Naive thymus-derived CD4-positive, alpha-beta T cell (primary cell): ENCODE measurements at regions of chr1 and their contacts with region 1.

Region 1: GRCh38 chr1:20633190-20634064 is at the start of gene PINK1:
- DNase-seq: peak; percentile 78 to 99 (median 90)
- ATAC-seq: peak; percentile 92
- H3K4me3 ChIP-seq: peak within 1 kb of the TSS; percentile 80
- H3K4me3 Mint-ChIP-seq: peak within 1 kb of the TSS; percentile 78 to 98 (median 94)
- H3K27ac ChIP-seq: peak within 1 kb of the TSS; percentile 86
- H3K27ac Mint-ChIP-seq: peak within 1 kb of the TSS; percentile 69 to 94 (median 88)
- H3K4me1 ChIP-seq: peaks cover 8 to 9% of the 10 kb centered on the region in 2 donors
- H3K4me1 Mint-ChIP-seq: peaks cover 0 to 13% (median 8%) of the 10 kb centered on the region in 7 donors
- H3K27me3 ChIP-seq: no peaks in the 10 kb centered on the region
- H3K27me3 Mint-ChIP-seq: peaks cover 0 to 22% (median 2%) of the 10 kb centered on the region in 5 donors
- total RNA-seq, gene PINK1: 4.3 to 19.7 (median 13.1) TPM

Region 2: GRCh38 chr1:20507564-20508410 is 125.6 kb before region 1 on chr1 and contains the start of gene MUL1:
- CTCF ChIA-PET with region 1: interaction called, 3 read pairs
- POLR2A ChIA-PET with region 1: interaction called, 6 read pairs
- intact Hi-C with region 1: loop called (anchors 1 to 5 kb)
- DNase-seq: peak; percentile 83 to 95 (median 89)
- ATAC-seq: peak; percentile 94
- H3K4me3 ChIP-seq: peak within 1 kb of the TSS; percentile 88
- H3K4me3 Mint-ChIP-seq: peak within 1 kb of the TSS; percentile 83 to 98 (median 88)
- H3K27ac ChIP-seq: peak within 1 kb of the TSS; percentile 97
- H3K27ac Mint-ChIP-seq: peak within 1 kb of the TSS; percentile 72 to 97 (median 92)
- H3K4me1 ChIP-seq: peaks cover 8 to 22% of the 10 kb centered on the region in 2 donors
- H3K4me1 Mint-ChIP-seq: peaks cover 15 to 40% (median 23%) of the 10 kb centered on the region in 7 donors
- H3K27me3 ChIP-seq: no peaks in the 10 kb centered on the region
- H3K27me3 Mint-ChIP-seq: peaks cover 0 to 5% (median 1%) of the 10 kb centered on the region in 5 donors
- total RNA-seq, gene MUL1: 16.5 to 21.5 (median 20.5) TPM

Region 3: DNA sequence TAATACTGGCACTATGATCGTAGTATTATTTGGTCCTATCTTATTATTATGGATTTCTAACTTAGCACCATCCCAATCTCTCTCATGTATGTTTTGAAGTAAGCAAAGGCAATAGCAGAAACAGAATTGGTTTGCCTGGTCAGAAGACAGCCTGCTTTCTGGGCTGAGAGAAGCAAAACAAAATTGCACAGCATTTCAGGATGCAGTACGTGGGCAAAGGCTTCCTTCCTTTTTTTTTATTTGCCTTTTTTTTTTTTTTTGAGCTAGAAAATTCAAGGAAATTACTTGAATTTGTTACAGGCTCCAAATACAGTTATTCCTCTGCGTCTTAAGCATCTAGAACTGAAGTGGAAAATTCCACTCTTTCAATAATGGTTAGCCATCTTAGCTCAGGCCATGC is 35.8 kb before region 1 on chr1:
- CTCF ChIA-PET with region 1: no interaction called
- POLR2A ChIA-PET with region 1: no interaction called
- intact Hi-C with region 1: no loop called
- DNase-seq: no peak
- ATAC-seq: no peak
- H3K4me3 ChIP-seq: no peak overlapping the region
- H3K4me3 Mint-ChIP-seq: no peak overlapping the region
- H3K27ac ChIP-seq: no peak overlapping the region
- H3K27ac Mint-ChIP-seq: no peak overlapping the region
- H3K4me1 ChIP-seq: no peaks in the 10 kb centered on the region
- H3K4me1 Mint-ChIP-seq: peaks cover 0 to 2% (median 0%) of the 10 kb centered on the region in 7 donors
- H3K27me3 ChIP-seq: no peaks in the 10 kb centered on the region
- H3K27me3 Mint-ChIP-seq: peaks cover 1 to 22% (median 10%) of the 10 kb centered on the region in 5 donors

Region 4: GRCh38 chr1:20661207-20662109 is 28.0 kb after region 1 on chr1 and contains the start of gene DDOST:
- CTCF ChIA-PET with region 1: interaction called, 8 read pairs
- POLR2A ChIA-PET with region 1: interaction called, 34 read pairs
- intact Hi-C with region 1: loop called (anchors 1 kb)
- DNase-seq: peak; percentile 78 to 96 (median 94)
- ATAC-seq: peak; percentile 98
- H3K4me3 ChIP-seq: peak within 1 kb of the TSS; percentile 93
- H3K4me3 Mint-ChIP-seq: peak within 1 kb of the TSS; percentile 89 to 99 (median 96)
- H3K27ac ChIP-seq: peak within 1 kb of the TSS; percentile 87
- H3K27ac Mint-ChIP-seq: peak within 1 kb of the TSS; percentile 85 to 99 (median 98)
- H3K4me1 ChIP-seq: peaks cover 21 to 24% of the 10 kb centered on the region in 2 donors
- H3K4me1 Mint-ChIP-seq: peaks cover 31 to 60% (median 41%) of the 10 kb centered on the region in 7 donors
- H3K27me3 ChIP-seq: no peaks in the 10 kb centered on the region
- H3K27me3 Mint-ChIP-seq: no peaks in the 10 kb centered on the region
- total RNA-seq, gene DDOST: 96.9 to 173 (median 109) TPM

Region 5: DNA sequence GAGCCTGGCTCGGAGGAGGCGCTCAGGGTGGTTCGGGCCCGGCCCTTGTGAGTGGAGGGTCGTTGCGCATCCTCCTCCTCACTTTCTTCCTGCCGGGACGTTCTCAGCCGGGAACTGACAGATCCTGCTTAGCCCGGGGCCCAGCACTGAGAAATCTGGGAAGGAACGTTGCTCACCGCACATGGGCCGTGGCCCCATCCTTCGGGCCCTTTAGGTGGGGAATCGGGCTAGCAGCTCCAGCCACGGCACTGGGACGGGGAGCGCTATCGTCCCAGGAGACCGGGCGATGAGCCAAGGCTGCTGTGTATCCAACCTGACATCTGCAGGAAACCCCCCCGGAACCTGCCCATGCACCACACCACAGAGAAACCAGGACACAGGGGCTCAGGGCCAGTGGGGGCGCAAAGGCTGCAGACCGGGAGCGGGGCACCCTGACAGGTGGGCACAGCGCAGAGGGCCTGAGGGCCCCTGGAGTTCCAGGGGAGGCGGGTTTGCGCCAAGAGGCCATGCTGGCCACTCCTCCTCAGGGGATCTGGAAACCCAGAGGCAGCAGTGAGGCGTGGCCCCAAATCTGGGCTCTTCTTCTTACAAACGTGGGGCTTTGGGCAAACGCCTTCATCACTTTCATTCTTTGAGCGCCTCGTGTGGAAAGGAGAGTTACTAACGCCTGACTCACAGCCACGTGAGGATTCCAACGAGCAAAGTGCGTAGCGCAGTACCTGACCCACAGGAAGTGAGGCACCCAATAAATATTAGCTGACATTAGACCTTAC is 99.3 kb after region 1 on chr1 and contains the start of gene SH2D5:
- CTCF ChIA-PET with region 1: no interaction called
- POLR2A ChIA-PET with region 1: no interaction called
- intact Hi-C with region 1: loop called in 1 of 2 experiments (anchors 5 kb)
- DNase-seq: peak in 8 of 9 donors; percentile 21 to 62 (median 47)
- ATAC-seq: peak; percentile 85
- H3K4me3 ChIP-seq: peak within 1 kb of the TSS; percentile 63
- H3K4me3 Mint-ChIP-seq: peak within 1 kb of the TSS; percentile 86 to 95 (median 88)
- H3K27ac ChIP-seq: no peak within 1 kb of the TSS
- H3K27ac Mint-ChIP-seq: peak within 1 kb of the TSS in 6 of 9 donors; percentile 28 to 83 (median 60)
- H3K4me1 ChIP-seq: peaks cover 8 to 14% of the 10 kb centered on the region in 2 donors
- H3K4me1 Mint-ChIP-seq: peaks cover 10 to 23% (median 17%) of the 10 kb centered on the region in 7 donors
- H3K27me3 ChIP-seq: peaks cover 0 to 8% of the 10 kb centered on the region in 2 donors
- H3K27me3 Mint-ChIP-seq: peaks cover 10 to 49% (median 21%) of the 10 kb centered on the region in 5 donors
- total RNA-seq, gene SH2D5: 0.35 TPM in 2 of 5 experiments, not detected in the others